ENCODE measurements at regions of chr2 and their contacts with region 1.

Region 1: GRCh38 chr2:157433394-157433793 is 10.5 kb downstream of the CYTIP start:
- DNase-seq: no peak
- ATAC-seq: no peak
- H3K4me3 ChIP-seq: peak overlapping the region; percentile 35; the same call in 1 of the 2 replicates
- H3K27ac ChIP-seq: no peak overlapping the region
- H3K4me1 ChIP-seq: peaks cover 10% of the 10 kb centered on the region
- H3K27me3 ChIP-seq: no peaks in the 10 kb centered on the region
- CTCF ChIP-seq: no peak
- EP300 ChIP-seq: no peak
- POLR2A ChIP-seq: no peak
- RAD21 ChIP-seq: no peak

Region 2: GRCh38 chr2:157404363-157404762 is 29.0 kb before region 1 on chr2:
- CTCF ChIA-PET with region 1: interaction called, 3 read pairs
- POLR2A ChIA-PET with region 1: interaction called, 16 read pairs
- RAD21 ChIA-PET with region 1: interaction called, 6 read pairs
- SMC1A ChIA-PET with region 1: interaction called, 111 read pairs
- in situ Hi-C with region 1: no loop called
- intact Hi-C with region 1: no loop called
- DNase-seq: peak; percentile 85
- ATAC-seq: peak; percentile 99
- H3K4me3 ChIP-seq: no peak overlapping the region
- H3K27ac ChIP-seq: no peak overlapping the region; the same call in 1 of the 2 replicates
- H3K4me1 ChIP-seq: peaks cover 7% of the 10 kb centered on the region
- H3K27me3 ChIP-seq: no peaks in the 10 kb centered on the region
- CTCF ChIP-seq: no peak
- EP300 ChIP-seq: peak; percentile 87 to 92
- POLR2A ChIP-seq: no peak
- RAD21 ChIP-seq: 0 out of 2 replicates have a peak, but pooled peaks have one; percentile 17

Region 3: GRCh38 chr2:157413326-157414035 is 19.9 kb before region 1 on chr2:
- CTCF ChIA-PET with region 1: interaction called, 14 read pairs
- POLR2A ChIA-PET with region 1: interaction called, 62 read pairs
- RAD21 ChIA-PET with region 1: interaction called, 116 read pairs
- SMC1A ChIA-PET with region 1: interaction called, 218 read pairs
- in situ Hi-C with region 1: no loop called
- intact Hi-C with region 1: loop called (anchors 2 kb)
- DNase-seq: peak; percentile 97
- ATAC-seq: peak; percentile 87
- H3K4me3 ChIP-seq: no peak overlapping the region
- H3K27ac ChIP-seq: peak overlapping the region; percentile 86
- H3K4me1 ChIP-seq: peaks cover 38% of the 10 kb centered on the region
- H3K27me3 ChIP-seq: no peaks in the 10 kb centered on the region
- CTCF ChIP-seq: no peak
- EP300 ChIP-seq: peak; percentile 71 to 74; a peak in 2 of 4 replicates
- POLR2A ChIP-seq: peak; percentile 18; the same call in 1 of the 2 replicates
- RAD21 ChIP-seq: peak; percentile 37

Region 4: GRCh38 chr2:157420771-157421323 is 12.5 kb before region 1 on chr2:
- CTCF ChIA-PET with region 1: interaction called, 14 read pairs
- POLR2A ChIA-PET with region 1: interaction called, 62 read pairs
- RAD21 ChIA-PET with region 1: interaction called, 116 read pairs
- SMC1A ChIA-PET with region 1: interaction called, 218 read pairs
- in situ Hi-C with region 1: no loop called
- intact Hi-C with region 1: loop called (anchors 2 kb)
- DNase-seq: no peak
- ATAC-seq: peak; percentile 74
- H3K4me3 ChIP-seq: no peak overlapping the region
- H3K27ac ChIP-seq: peak overlapping the region; percentile 60
- H3K4me1 ChIP-seq: peaks cover 34% of the 10 kb centered on the region
- H3K27me3 ChIP-seq: no peaks in the 10 kb centered on the region
- CTCF ChIP-seq: no peak
- EP300 ChIP-seq: peak in 1 of 2 experiments; percentile 73; a peak in 2 of 4 replicates
- POLR2A ChIP-seq: no peak
- RAD21 ChIP-seq: no peak

Region 5: DNA sequence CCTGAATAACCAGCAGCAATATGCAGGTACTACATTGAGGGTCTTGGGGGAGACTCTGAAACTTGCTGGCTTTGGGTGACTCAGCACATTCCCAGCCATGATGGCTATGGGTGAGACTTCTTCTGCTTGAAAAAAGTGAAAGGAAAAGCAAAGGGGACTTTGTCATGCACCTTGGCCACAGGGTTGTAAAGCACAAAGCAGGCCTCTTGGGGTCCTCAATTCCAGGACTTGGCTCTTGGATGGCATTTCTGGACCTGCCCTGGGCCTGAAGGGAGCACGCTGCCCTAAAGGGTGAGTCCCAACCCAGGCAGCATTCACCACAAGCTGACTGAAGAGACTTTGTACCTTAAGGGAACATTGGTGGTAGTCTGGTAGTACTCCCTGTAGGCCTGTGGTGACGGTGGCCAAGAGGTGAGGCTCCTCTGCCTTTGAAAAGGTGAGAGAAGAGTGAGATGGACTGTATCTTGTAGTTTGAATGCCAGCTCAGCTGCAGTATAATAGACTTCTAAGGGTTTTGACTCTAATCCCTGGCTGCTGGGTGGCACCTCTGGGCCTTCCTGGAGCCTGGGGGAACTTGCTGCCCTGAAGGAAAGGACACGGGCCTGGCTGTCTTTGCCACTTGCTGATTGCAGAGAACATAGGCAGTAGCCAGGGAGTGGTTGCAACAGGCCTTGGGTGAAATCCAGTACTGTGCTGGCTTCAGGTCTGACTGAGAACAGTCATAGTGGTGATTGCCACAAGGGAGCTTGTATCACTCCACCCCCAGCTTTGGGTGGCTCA is 47.0 kb after region 1 on chr2:
- CTCF ChIA-PET with region 1: interaction called, 4 read pairs
- POLR2A ChIA-PET with region 1: interaction called, 26 read pairs
- RAD21 ChIA-PET with region 1: interaction called, 5 read pairs
- SMC1A ChIA-PET with region 1: interaction called, 28 read pairs
- in situ Hi-C with region 1: no loop called
- intact Hi-C with region 1: no loop called
- DNase-seq: no peak
- ATAC-seq: peak; percentile 87
- H3K4me3 ChIP-seq: no peak overlapping the region
- H3K27ac ChIP-seq: peak overlapping the region; percentile 44
- H3K4me1 ChIP-seq: peaks cover 25% of the 10 kb centered on the region
- H3K27me3 ChIP-seq: no peaks in the 10 kb centered on the region
- CTCF ChIP-seq: no peak
- EP300 ChIP-seq: peak in 1 of 2 experiments; percentile 26; a peak in 1 of 4 replicates
- POLR2A ChIP-seq: peak; percentile 35; the same call in 1 of the 2 replicates
- RAD21 ChIP-seq: no peak

Measured in GM12878 (cell line).